Endothelial cell of umbilical vein (primary cell): ENCODE measurements at regions of chr12 and their contacts with region 1.

Region 1: GRCh38 chr12:75814851-75815754 is 216.5 kb downstream of the PHLDA1 start:
- DNase-seq: peak; percentile 95
- H3K4me3 ChIP-seq: no peak overlapping the region
- H3K27ac ChIP-seq: peak overlapping the region; percentile 19
- H3K4me1 ChIP-seq: peaks cover 10% of the 10 kb centered on the region
- H3K27me3 ChIP-seq: no peaks in the 10 kb centered on the region
- CTCF ChIP-seq: no peak
- POLR2A ChIP-seq: no peak

Region 2: DNA sequence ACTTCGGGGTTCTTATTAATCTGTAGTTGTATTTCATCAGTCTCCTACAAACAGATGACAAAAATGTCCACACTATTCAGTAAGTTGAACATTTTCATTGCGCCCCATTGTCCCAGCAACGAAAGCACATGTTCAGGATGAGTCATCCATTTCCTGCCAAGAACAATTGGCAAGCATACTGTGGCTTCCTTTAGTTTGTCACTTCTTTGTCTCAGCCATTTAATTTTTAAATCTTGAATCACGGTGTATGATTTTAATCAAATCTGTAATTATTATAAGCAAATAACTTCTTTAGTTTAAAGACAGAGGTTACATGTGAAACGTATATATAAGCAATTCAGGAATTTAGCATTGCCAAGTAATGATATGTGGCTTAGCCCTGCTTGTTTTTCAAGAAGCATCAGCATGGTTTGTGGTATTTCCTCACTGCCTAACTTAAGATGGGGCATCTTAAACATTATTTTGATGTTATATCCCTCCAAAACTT is 92.3 kb before region 1 on chr12:
- CTCF ChIA-PET with region 1: no interaction called
- POLR2A ChIA-PET with region 1: no interaction called
- dilution Hi-C with region 1: no loop called
- intact Hi-C with region 1: loop called (anchors 2 kb)
- DNase-seq: peak; percentile 95
- H3K4me3 ChIP-seq: no peak overlapping the region
- H3K27ac ChIP-seq: peak overlapping the region; percentile 92
- H3K4me1 ChIP-seq: peaks cover 46% of the 10 kb centered on the region
- H3K27me3 ChIP-seq: no peaks in the 10 kb centered on the region
- CTCF ChIP-seq: no peak
- POLR2A ChIP-seq: no peak

Region 3: GRCh38 chr12:76645934-76646333 is 830.8 kb after region 1 on chr12:
- CTCF ChIA-PET with region 1: no interaction called
- POLR2A ChIA-PET with region 1: no interaction called
- dilution Hi-C with region 1: no loop called
- intact Hi-C with region 1: no loop called
- DNase-seq: no peak
- H3K4me3 ChIP-seq: no peak overlapping the region
- H3K27ac ChIP-seq: no peak overlapping the region
- H3K4me1 ChIP-seq: peaks cover 6% of the 10 kb centered on the region
- H3K27me3 ChIP-seq: no peaks in the 10 kb centered on the region
- CTCF ChIP-seq: no peak
- POLR2A ChIP-seq: no peak